PC-3 (cell line): ENCODE measurements at regions of chr14 and their contacts with region 1.

Region 1: DNA sequence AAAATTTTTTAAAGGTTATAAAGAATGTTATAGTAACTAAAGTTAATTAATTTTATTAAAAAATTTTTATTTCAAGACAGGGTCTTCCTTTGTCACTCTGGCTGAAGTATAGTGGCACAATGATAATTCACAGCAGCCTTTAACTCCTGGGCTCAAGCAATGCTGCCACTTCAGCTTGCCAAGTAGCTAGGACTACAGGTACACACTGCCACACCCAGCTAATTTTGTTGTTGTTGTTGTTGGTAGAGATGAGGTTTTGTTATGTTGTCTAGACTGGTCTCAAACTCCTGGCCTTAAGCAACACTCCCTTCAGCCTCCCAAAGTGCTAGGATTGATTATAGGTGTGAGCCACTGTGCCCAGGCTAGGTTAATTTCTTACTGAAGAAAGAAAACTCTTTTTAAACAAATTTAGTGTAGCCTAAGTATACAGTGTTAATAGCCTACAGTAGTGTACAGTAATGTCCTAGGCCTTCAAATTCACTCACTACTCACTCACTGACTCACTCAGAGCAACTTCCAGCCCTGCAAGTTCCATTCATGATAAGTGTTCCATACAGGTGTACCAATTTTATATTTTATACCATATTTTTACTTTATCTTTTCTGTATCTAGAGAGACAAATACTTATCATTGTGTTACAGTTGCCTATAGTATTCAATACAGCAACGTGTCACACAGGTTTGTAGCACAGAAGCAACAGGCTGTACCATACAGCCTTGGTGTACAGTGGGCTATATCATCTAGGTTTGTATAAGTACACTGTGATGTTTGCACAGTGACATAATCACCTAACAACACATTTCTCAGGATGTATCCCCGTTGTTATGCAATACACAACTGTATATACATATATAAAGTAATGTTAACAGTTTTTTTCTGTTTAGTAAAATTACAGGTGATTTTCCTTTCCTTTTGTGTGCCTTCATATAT is 24.7 kb upstream of the DNAAF2 start:
- DNase-seq: peak; percentile 92
- ATAC-seq: peak; percentile 92
- H3K4me3 ChIP-seq: 0 out of 2 replicates have a peak overlapping the region, but pooled peaks have one; percentile 19
- H3K27ac ChIP-seq: peak overlapping the region; percentile 94
- H3K4me1 ChIP-seq: peaks cover 43% of the 10 kb centered on the region
- H3K27me3 ChIP-seq: no peaks in the 10 kb centered on the region
- CTCF ChIP-seq: no peak

Region 2: DNA sequence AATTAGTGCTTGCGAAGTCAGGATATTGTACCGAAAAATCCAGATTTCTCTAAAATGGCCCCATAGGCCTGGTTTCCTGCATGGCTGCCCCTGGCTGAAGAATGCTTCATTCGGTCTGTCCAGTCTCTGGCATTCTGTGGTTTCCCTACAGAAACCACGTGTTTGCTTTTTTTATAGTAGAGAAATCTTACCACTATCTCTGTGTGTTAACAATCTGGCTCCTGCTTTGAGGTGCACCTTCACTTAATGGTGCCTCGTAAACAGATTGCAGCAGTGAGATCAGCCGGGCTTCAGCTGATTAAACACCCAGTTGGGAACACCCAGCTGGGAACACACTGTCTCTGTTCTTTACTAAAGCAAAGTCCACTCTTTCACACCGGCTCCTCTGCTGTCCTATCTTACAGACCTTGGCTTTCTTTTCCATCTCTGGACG is 18.1 kb before region 1 on chr14:
- CTCF ChIA-PET with region 1: no interaction called
- POLR2A ChIA-PET with region 1: no interaction called
- intact Hi-C with region 1: loop called (anchors 2 kb)
- DNase-seq: peak; percentile 46
- ATAC-seq: peak; percentile 91
- H3K4me3 ChIP-seq: no peak overlapping the region
- H3K27ac ChIP-seq: peak overlapping the region; percentile 17; the same call in 1 of the 2 replicates
- H3K4me1 ChIP-seq: peaks cover 21% of the 10 kb centered on the region; the same call in 1 of the 2 replicates
- H3K27me3 ChIP-seq: no peaks in the 10 kb centered on the region
- CTCF ChIP-seq: no peak

Region 3: DNA sequence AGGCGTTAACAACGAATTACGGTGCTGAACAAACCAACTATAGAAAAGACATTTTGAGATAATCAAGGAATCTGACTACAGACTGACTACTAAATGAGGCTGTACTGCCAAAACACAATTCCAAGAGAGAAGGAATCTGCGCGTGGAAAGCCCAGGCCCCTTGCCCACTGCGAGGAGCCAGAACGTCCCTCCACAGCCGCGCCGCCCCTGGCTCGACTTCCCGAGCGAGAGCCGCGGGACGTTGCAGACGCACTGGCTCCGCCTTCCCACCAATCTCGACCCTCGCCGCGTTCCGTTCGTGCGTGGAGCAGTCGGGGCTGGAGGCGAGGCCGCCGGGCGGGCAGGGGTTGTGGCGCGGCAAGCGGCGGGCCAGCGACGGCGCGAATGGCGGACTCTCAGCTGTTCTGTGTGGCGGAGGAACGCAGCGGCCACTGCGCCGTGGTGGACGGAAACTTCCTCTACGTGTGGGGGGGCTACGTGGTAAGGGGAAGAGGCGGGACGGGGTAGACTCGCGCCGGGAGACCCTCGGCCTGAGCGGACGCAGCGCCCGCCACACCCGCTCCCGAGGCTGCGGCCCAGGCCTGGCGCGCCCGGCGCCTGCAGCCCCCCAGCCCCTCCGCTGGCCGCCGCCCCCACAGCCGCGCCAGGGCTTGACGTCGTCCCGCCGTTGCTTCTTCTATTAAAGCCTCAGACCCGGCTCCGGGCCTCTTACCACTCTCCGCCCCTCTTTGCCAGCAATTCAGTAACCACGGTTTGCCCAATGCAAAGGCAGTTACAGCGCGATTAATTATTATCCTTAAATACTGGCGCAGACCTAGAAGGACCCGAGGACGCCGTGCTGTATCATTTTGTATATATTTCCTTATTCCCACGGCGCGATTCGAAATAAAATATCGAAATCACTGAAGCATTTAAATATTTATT is 33.3 kb after region 1 on chr14 and contains the start of gene KLHDC1:
- CTCF ChIA-PET with region 1: no interaction called
- POLR2A ChIA-PET with region 1: no interaction called
- intact Hi-C with region 1: loop called (anchors 5 kb)
- DNase-seq: peak; percentile 68
- ATAC-seq: peak; percentile 72
- H3K4me3 ChIP-seq: peak within 1 kb of the TSS; percentile 87
- H3K27ac ChIP-seq: peak within 1 kb of the TSS; percentile 41
- H3K4me1 ChIP-seq: peaks cover 12% of the 10 kb centered on the region; the same call in 1 of the 2 replicates
- H3K27me3 ChIP-seq: no peaks in the 10 kb centered on the region
- CTCF ChIP-seq: no peak
- total RNA-seq, gene KLHDC1: 0.07 and 0.58 TPM in 2 replicates